ENCODE measurements at regions of chr16 and their contacts with region 1.

Region 1: GRCh38 chr16:85986931-85987749 is 88.2 kb downstream of the IRF8 start:
- DNase-seq: peak; percentile 64
- ATAC-seq: no peak
- H3K4me3 Mint-ChIP-seq: no peak overlapping the region
- H3K27ac Mint-ChIP-seq: peak overlapping the region; percentile 62
- H3K4me1 Mint-ChIP-seq: peaks cover 78% of the 10 kb centered on the region
- H3K27me3 Mint-ChIP-seq: peaks cover 1% of the 10 kb centered on the region
- CTCF ChIP-seq: peak; percentile 77

Region 2: GRCh38 chr16:85794696-85795095 is 192.4 kb before region 1 on chr16:
- CTCF ChIA-PET with region 1: no interaction called
- POLR2A ChIA-PET with region 1: no interaction called
- intact Hi-C with region 1: no loop called
- DNase-seq: no peak
- ATAC-seq: no peak
- H3K4me3 Mint-ChIP-seq: no peak overlapping the region
- H3K27ac Mint-ChIP-seq: no peak overlapping the region
- H3K4me1 Mint-ChIP-seq: peaks cover 65% of the 10 kb centered on the region
- H3K27me3 Mint-ChIP-seq: no peaks in the 10 kb centered on the region
- CTCF ChIP-seq: no peak

Region 3: GRCh38 chr16:85898521-85899442 is 88.4 kb before region 1 on chr16 and contains the start of gene IRF8:
- CTCF ChIA-PET with region 1: interaction called, 63 read pairs
- POLR2A ChIA-PET with region 1: interaction called, 16 read pairs
- intact Hi-C with region 1: loop called (anchors 5 kb)
- DNase-seq: peak; percentile 90
- ATAC-seq: peak; percentile 80
- H3K4me3 Mint-ChIP-seq: peak within 1 kb of the TSS; percentile 86
- H3K27ac Mint-ChIP-seq: peak within 1 kb of the TSS; percentile 90
- H3K4me1 Mint-ChIP-seq: peaks cover 38% of the 10 kb centered on the region
- H3K27me3 Mint-ChIP-seq: no peaks in the 10 kb centered on the region
- CTCF ChIP-seq: no peak
- total RNA-seq, gene IRF8: 221 to 224 TPM

Region 4: DNA sequence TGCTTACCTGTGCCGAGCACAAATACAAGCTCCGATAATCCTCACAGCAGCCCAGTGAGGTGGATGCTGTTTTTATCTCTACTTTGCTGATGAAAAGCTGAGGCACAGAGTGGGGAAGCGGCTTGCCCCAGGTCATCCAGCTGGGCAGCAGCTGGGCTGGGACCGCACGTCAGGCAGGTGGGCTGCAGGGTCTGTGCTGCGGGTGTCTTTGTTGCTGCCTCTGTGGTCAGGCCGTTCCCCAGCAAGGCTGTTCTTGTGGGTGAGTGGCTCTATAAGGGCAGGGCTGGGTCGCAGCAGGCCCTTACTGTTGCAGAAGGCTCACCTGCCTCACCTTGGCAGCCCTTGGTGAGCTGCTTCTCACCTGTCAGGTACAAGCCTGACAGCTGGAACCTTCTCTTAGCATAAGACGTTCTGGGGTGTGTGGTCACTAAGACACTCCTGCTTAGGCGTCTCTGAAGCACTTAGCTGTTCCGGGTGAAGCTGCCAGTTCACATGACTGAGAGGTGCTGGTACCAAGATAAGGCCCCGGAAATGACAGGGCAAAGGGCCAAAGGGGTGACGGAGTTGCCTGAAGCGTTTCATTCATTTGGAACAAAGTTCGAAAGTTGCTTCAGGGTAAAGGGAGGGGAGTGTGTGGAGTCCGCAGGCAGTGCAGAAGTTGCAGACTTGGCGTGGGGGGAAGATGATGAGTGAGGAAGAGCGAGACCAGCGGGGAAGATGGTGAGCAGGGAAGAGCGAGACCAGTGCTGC is 70.8 kb before region 1 on chr16:
- CTCF ChIA-PET with region 1: interaction called, 12 read pairs
- POLR2A ChIA-PET with region 1: interaction called, 6 read pairs
- intact Hi-C with region 1: no loop called
- DNase-seq: no peak
- ATAC-seq: no peak
- H3K4me3 Mint-ChIP-seq: no peak overlapping the region
- H3K27ac Mint-ChIP-seq: peak overlapping the region; percentile 44
- H3K4me1 Mint-ChIP-seq: peaks cover 31% of the 10 kb centered on the region
- H3K27me3 Mint-ChIP-seq: no peaks in the 10 kb centered on the region
- CTCF ChIP-seq: no peak

Region 5: DNA sequence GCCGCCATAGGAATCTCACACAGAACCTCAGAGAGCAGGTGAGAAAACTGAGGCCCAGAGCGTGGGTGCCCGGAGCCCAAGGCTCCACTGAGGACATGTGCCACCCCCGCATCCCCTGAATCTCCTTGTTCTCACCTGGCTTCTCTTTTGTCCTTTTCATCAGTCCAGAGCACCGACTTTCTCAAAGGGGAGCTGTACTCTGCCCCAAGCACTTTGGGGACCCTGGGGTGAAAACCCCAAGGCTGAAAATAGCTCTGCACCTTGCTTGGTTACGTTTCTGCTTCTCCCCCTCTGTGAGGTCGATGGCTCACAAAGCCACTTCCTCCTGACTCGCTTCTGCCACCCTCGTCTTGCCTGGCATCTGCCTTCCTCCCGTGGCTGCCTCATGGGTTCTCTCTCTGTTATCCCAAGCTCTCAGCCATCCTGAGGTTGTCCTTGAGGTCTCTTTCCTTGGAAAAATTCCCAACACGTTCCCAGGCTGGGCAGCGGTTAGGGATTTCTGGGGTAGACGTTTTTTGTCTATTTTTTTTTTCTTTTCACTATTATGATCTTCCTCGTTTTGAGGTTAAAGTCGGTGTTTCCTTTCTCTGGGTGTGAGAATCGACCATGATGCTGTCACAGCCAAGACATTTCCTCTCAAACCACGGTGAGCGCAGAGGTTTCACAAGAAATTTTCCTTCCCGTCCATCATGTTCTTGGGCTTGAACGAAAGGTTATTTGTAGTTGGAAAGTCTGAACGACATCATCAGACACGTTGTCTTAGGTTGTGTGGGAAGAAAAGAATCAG is 51.0 kb before region 1 on chr16:
- CTCF ChIA-PET with region 1: interaction called, 10 read pairs
- POLR2A ChIA-PET with region 1: interaction called, 13 read pairs
- intact Hi-C with region 1: loop called (anchors 5 kb)
- DNase-seq: peak; percentile 93
- ATAC-seq: peak; percentile 84
- H3K4me3 Mint-ChIP-seq: peak overlapping the region; percentile 64
- H3K27ac Mint-ChIP-seq: peak overlapping the region; percentile 99
- H3K4me1 Mint-ChIP-seq: peaks cover 72% of the 10 kb centered on the region
- H3K27me3 Mint-ChIP-seq: no peaks in the 10 kb centered on the region
- CTCF ChIP-seq: no peak

Region 6: DNA sequence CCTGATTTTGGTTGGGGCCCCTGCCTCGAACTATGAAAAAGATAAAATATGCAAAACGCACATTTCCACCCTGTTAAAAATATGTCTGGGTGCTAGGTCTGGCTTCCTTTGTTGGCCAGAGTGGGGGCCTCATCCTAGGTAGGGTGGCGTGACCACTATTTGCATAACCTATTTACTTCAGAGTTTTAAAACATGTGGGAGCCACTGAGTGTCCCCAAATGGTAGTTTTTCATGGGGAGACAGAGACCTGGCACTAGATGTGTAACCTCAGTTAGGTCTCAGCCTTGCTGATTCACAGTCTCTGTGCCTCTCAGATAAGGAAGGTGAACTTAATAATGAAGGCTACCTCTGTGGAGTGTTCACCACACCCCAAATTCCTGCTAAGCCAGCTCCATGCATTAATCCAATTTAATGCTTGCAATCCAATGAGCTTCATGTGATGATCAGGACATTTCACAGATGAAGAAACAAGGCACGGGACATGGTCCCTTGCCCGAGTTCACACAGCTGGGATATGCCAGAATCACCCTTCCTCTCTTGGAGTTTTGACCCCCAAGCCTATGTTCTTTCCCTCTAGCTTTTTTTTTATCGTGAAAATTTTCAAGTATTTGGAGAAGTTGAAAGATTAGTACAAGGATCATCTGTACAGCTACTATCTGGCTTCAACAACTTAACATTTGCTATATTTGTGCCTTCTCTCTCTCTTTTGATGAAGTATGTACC is 15.2 kb after region 1 on chr16:
- CTCF ChIA-PET with region 1: interaction called, 14 read pairs
- POLR2A ChIA-PET with region 1: interaction called, 8 read pairs
- intact Hi-C with region 1: no loop called
- DNase-seq: no peak
- ATAC-seq: no peak
- H3K4me3 Mint-ChIP-seq: no peak overlapping the region
- H3K27ac Mint-ChIP-seq: no peak overlapping the region
- H3K4me1 Mint-ChIP-seq: peaks cover 20% of the 10 kb centered on the region
- H3K27me3 Mint-ChIP-seq: peaks cover 4% of the 10 kb centered on the region
- CTCF ChIP-seq: no peak

Region 7: GRCh38 chr16:86007524-86007923 is 20.4 kb after region 1 on chr16:
- CTCF ChIA-PET with region 1: interaction called, 14 read pairs
- POLR2A ChIA-PET with region 1: interaction called, 5 read pairs
- intact Hi-C with region 1: no loop called
- DNase-seq: no peak
- ATAC-seq: peak; percentile 68
- H3K4me3 Mint-ChIP-seq: peak overlapping the region; percentile 16
- H3K27ac Mint-ChIP-seq: peak overlapping the region; percentile 76
- H3K4me1 Mint-ChIP-seq: peaks cover 31% of the 10 kb centered on the region
- H3K27me3 Mint-ChIP-seq: peaks cover 4% of the 10 kb centered on the region
- CTCF ChIP-seq: no peak

Region 8: GRCh38 chr16:86016201-86016871 is 29.2 kb after region 1 on chr16:
- CTCF ChIA-PET with region 1: interaction called, 33 read pairs
- POLR2A ChIA-PET with region 1: interaction called, 7 read pairs
- intact Hi-C with region 1: no loop called
- DNase-seq: peak; percentile 27
- ATAC-seq: peak; percentile 67
- H3K4me3 Mint-ChIP-seq: no peak overlapping the region
- H3K27ac Mint-ChIP-seq: no peak overlapping the region
- H3K4me1 Mint-ChIP-seq: peaks cover 23% of the 10 kb centered on the region
- H3K27me3 Mint-ChIP-seq: peaks cover 35% of the 10 kb centered on the region
- CTCF ChIP-seq: peak; percentile 93